CD4-positive, alpha-beta memory T cell (primary cell): ENCODE measurements at regions of chr9 and their contacts with region 1.

Region 1: GRCh38 chr9:69180670-69181069 is 6.6 kb downstream of the TJP2 start:
- DNase-seq: peak; percentile 26 to 68 (median 36)
- H3K4me3 ChIP-seq: no peak overlapping the region
- H3K4me3 Mint-ChIP-seq: peak overlapping the region in 3 of 8 donors; percentile 17 to 43 (median 20)
- H3K27ac ChIP-seq: no peak overlapping the region
- H3K27ac Mint-ChIP-seq: peak overlapping the region; percentile 5 to 74 (median 61)
- H3K4me1 ChIP-seq: peaks cover 29% of the 10 kb centered on the region
- H3K4me1 Mint-ChIP-seq: peaks cover 16 to 54% (median 34%) of the 10 kb centered on the region in 4 donors
- H3K27me3 ChIP-seq: no peaks in the 10 kb centered on the region
- H3K27me3 Mint-ChIP-seq: no peaks in the 10 kb centered on the region

Region 2: DNA sequence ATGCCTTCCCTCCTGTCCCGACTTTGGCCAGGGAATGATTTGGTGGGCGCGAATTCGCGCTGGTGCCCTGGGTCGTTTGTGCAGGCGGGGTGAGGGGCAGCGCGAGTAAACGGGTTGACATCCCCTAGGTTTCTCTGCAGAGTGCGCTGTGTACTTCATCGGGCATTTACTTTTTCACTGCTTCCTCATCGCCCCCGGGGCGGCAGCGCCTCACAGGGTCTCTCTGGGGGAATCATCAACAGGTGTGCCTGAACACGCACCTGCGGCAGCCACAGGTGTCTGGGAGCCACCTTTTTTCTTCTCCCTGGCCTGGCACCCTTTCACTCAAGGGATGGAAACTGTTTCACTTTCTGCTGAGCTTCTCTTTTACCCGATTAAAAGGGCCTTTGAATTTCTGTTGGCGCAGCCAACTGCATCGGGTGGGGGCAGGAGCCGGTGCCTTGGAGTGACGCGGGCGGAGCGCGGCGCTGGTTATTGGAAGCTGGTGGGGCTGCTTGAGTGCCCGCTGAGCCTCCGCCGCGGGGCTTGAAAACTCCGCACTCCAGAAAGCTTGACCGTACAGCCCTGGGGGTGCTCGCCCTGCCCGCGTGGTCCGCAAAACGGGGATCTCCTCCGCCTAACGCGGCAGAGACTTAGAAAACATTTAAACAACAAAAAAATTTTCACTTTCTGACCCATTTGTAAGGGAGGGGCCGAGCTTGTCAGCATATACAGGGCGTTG is 58.7 kb before region 1 on chr9:
- CTCF ChIA-PET with region 1: interaction called, 12 read pairs
- POLR2A ChIA-PET with region 1: interaction called, 3 read pairs
- intact Hi-C with region 1: no loop called
- DNase-seq: peak; percentile 44 to 59 (median 54)
- H3K4me3 ChIP-seq: peak overlapping the region; percentile 34 to 75
- H3K4me3 Mint-ChIP-seq: peak overlapping the region; percentile 93 to 97 (median 96)
- H3K27ac ChIP-seq: no peak overlapping the region
- H3K27ac Mint-ChIP-seq: peak overlapping the region; percentile 31 to 92 (median 87)
- H3K4me1 ChIP-seq: peaks cover 13% of the 10 kb centered on the region
- H3K4me1 Mint-ChIP-seq: peaks cover 6 to 19% (median 11%) of the 10 kb centered on the region in 4 donors
- H3K27me3 ChIP-seq: no peaks in the 10 kb centered on the region
- H3K27me3 Mint-ChIP-seq: no peaks in the 10 kb centered on the region

Region 3: GRCh38 chr9:69168709-69169217 is 11.9 kb before region 1 on chr9:
- CTCF ChIA-PET with region 1: interaction called, 4 read pairs
- POLR2A ChIA-PET with region 1: interaction called, 10 read pairs
- intact Hi-C with region 1: no loop called
- DNase-seq: peak; percentile 25 to 55 (median 40)
- H3K4me3 ChIP-seq: peak overlapping the region in 1 of 2 donors; percentile 47
- H3K4me3 Mint-ChIP-seq: peak overlapping the region; percentile 86 to 95 (median 91)
- H3K27ac ChIP-seq: peak overlapping the region; percentile 22
- H3K27ac Mint-ChIP-seq: peak overlapping the region; percentile 41 to 95 (median 86)
- H3K4me1 ChIP-seq: peaks cover 18% of the 10 kb centered on the region
- H3K4me1 Mint-ChIP-seq: peaks cover 9 to 27% (median 17%) of the 10 kb centered on the region in 4 donors
- H3K27me3 ChIP-seq: peaks cover 10% of the 10 kb centered on the region
- H3K27me3 Mint-ChIP-seq: peaks cover 4 to 14% of the 10 kb centered on the region in 2 donors

Region 4: GRCh38 chr9:69199769-69200470 is 19.2 kb after region 1 on chr9:
- CTCF ChIA-PET with region 1: interaction called, 13 read pairs
- POLR2A ChIA-PET with region 1: interaction called, 3 read pairs
- intact Hi-C with region 1: no loop called
- DNase-seq: no peak
- H3K4me3 ChIP-seq: no peak overlapping the region
- H3K4me3 Mint-ChIP-seq: peak overlapping the region in 6 of 8 donors; percentile 5 to 65 (median 37)
- H3K27ac ChIP-seq: no peak overlapping the region
- H3K27ac Mint-ChIP-seq: no peak overlapping the region
- H3K4me1 ChIP-seq: peaks cover 10% of the 10 kb centered on the region
- H3K4me1 Mint-ChIP-seq: peaks cover 12 to 23% (median 18%) of the 10 kb centered on the region in 4 donors
- H3K27me3 ChIP-seq: no peaks in the 10 kb centered on the region
- H3K27me3 Mint-ChIP-seq: no peaks in the 10 kb centered on the region